ENCODE measurements at regions of chr17 and their contacts with region 1.

Region 1: DNA sequence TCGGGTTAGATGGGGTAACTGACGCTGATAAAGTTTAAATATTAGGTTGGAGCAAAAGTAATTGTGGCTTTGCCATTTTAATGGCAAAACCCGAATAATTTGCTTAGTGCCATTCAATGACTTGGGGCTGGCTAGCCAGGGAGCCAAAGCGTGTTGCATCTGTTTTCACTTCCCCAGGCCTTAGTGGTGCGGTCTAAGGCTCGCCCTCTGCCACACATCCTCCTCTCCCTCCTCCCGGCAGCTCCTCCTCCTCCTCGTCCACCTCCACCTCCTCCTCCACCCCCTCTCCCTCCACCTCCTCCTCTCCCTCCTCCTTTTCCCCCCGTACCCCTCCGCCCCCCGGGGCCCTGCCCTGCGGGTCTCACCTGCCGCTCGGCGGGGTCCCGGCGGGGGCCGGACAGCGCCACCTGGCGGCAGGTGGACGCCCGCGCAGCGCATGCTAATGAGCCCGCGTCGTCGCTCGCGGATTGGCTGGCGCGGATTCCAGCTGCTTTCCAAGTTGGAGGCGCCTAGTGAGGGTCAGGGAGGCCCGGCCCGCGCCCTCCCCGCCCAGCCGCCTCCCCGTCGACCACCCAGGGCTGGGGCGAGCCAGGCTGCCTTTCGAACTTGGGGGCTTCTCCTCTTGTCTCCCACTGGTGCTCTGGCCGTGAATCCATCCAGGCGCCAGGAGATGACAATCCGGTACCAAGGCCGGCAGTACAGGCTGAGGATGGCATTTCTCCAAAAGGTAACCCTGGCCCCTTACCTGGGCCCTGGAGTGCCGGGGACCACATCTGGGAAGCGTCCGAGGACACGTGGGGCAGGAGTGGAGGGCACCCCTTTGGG is 36.6 kb upstream of the RGS9 start:
- DNase-seq: peak; percentile 90 to 93 (median 91)
- ATAC-seq: peak; percentile 96
- H3K4me3 ChIP-seq: no peak overlapping the region
- H3K4me1 ChIP-seq: peaks cover 6% of the 10 kb centered on the region
- CTCF ChIP-seq: peak; percentile 90

Region 2: GRCh38 chr17:64968652-64969501 is 131.7 kb before region 1 on chr17:
- intact Hi-C with region 1: loop called (anchors 5 to 10 kb)
- DNase-seq: no peak
- ATAC-seq: no peak
- H3K4me3 ChIP-seq: no peak overlapping the region
- H3K4me1 ChIP-seq: peaks cover 6% of the 10 kb centered on the region
- CTCF ChIP-seq: no peak

Region 3: GRCh38 chr17:65173284-65173793 is 72.8 kb after region 1 on chr17:
- intact Hi-C with region 1: no loop called
- DNase-seq: peak; percentile 40 to 71 (median 63)
- ATAC-seq: peak; percentile 84
- H3K4me3 ChIP-seq: no peak overlapping the region
- H3K4me1 ChIP-seq: no peaks in the 10 kb centered on the region
- CTCF ChIP-seq: no peak

Region 4: DNA sequence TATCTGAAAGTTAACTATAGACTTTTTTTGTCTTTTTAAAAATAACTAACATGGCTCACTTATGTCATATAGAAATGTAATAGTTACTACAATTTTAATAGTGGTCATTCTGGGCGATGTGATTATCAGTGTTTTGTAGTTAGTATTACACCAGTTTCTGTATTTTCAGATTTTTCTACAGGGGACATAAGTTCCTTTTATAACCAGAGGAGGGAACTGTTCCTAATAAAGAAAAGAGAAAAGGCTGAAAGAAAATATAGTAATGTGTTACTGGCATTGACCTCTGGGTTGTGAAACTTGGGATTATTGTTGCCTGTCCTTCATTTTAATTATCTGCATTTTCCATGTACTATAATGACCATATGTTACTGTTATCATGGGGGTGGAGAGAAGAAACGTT is 322.2 kb after region 1 on chr17:
- intact Hi-C with region 1: no loop called
- DNase-seq: no peak
- ATAC-seq: no peak
- H3K4me3 ChIP-seq: no peak overlapping the region
- H3K4me1 ChIP-seq: no peaks in the 10 kb centered on the region
- CTCF ChIP-seq: no peak